Activated CD4-positive, alpha-beta T cell treated with anti-CD3 and anti-CD28 coated beads, Interleukin-2, amount 10 ng/mL, durations not matched to agents 7 days and 5 days (primary cell): ENCODE measurements at regions of chr12 and their contacts with region 1.

Region 1: DNA sequence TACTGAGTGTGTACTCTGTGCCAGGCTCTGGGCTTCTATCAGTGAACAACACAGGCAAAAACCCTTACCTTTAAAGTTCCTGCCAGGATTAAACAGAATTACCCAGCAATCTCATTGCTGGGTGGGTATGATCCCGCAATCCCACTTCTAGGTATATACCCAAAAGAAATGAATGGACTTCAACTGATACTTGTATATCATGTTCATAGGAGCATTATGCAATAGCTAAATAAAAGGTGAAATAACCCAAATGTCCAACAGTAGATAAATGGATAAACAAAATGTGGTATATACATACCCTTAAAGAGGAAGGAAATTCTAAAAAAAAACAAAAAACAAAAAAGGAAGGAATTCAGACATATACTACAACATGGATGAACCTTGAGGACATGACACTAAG is 14.7 kb downstream of the DAZAP2 start:
- DNase-seq: no peak
- H3K4me3 Mint-ChIP-seq: no peak overlapping the region
- H3K27ac Mint-ChIP-seq: no peak overlapping the region
- H3K4me1 Mint-ChIP-seq: peaks cover 7% of the 10 kb centered on the region
- H3K27me3 Mint-ChIP-seq: no peaks in the 10 kb centered on the region

Region 2: DNA sequence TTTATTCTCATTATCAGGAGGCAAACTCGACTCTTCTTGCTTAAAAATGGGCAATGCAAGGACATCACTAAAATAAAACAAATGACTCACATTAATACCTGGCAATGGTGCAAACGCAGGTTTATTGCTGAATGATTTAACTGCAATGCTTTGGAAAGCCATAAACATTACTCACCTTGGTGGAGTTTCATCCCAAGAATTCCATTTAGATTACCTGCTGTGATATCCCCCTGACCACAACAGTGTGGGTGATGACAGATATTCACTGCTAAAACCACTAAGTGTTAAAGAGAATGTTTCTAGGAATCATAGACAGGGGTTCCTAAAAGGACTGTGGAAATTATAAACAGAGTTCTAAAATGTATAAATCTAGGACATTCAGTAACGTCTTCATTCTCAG is 134.6 kb before region 1 on chr12:
- CTCF ChIA-PET with region 1: no interaction called
- POLR2A ChIA-PET with region 1: no interaction called
- DNase-seq: no peak
- H3K4me3 Mint-ChIP-seq: no peak overlapping the region
- H3K27ac Mint-ChIP-seq: no peak overlapping the region
- H3K4me1 Mint-ChIP-seq: no peaks in the 10 kb centered on the region
- H3K27me3 Mint-ChIP-seq: no peaks in the 10 kb centered on the region

Region 3: DNA sequence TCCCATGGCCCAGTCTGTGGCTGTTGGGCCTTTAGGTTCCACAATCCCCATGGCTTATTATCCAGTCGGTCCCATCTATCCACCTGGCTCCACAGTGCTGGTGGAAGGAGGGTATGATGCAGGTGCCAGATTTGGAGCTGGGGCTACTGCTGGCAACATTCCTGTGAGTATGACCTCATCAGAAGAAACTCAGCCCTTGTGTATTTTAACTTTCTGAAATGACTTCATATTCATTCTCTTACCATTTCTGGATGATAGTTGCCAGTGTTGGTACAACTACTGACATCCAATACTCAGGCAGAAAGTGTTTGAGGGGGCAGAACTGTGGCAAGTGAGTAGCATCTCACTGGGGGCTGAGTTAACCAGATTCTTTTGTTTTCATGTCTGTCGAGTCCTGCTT is 12.3 kb before region 1 on chr12:
- CTCF ChIA-PET with region 1: interaction called, 12 read pairs
- POLR2A ChIA-PET with region 1: no interaction called
- DNase-seq: no peak
- H3K4me3 Mint-ChIP-seq: peak overlapping the region; percentile 95
- H3K27ac Mint-ChIP-seq: no peak overlapping the region
- H3K4me1 Mint-ChIP-seq: peaks cover 54% of the 10 kb centered on the region
- H3K27me3 Mint-ChIP-seq: no peaks in the 10 kb centered on the region